Left ventricle myocardium inferior (tissue), 1 donor: ENCODE measurements at regions of chr17 and their contacts with region 1.

Region 1: DNA sequence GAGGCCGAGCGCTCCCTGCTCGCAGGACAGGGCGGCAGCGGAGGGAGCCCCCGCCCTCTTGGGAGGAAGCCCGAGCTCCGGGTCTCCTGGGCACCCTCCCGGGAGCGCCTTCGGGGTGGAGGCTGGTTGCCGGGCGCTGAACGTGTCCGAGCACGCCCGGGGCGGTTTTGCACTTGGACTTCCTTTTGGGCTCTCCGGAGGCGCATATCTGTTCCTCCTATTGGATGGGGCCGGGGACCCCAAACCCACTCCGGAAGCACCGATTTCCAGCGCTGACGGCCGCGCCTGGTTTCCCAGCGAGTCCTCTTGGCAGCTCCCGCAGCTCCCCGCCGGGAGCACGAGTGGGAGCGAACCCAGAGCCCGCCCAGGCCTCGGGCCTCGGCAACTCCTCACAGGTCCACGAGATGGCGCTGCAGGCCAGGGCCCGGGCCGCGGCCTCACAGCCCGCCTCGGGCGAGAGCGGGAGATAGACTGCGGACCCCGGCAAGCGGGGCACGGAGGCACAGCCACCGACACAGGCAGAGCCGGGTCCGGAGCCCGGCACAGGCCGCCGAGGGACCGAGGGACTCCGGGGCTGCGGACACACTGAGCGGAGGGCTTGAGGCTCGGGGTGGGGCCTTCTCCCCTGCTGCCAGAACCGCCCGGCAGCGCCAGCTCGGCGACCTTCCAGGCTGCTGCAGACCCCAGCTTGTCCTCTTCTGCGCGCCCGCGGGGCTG is 12.7 kb downstream of the TBX2 start:
- DNase-seq: peak; percentile 84
- H3K4me3 ChIP-seq: peak overlapping the region; percentile 77
- H3K27ac ChIP-seq: peak overlapping the region; percentile 93
- H3K4me1 ChIP-seq: peaks cover 82% of the 10 kb centered on the region
- H3K27me3 ChIP-seq: peaks cover 27% of the 10 kb centered on the region
- CTCF ChIP-seq: peak; percentile 100

Region 2: GRCh38 chr17:61002316-61002736 is 410.0 kb before region 1 on chr17:
- intact Hi-C with region 1: loop called (anchors 10 kb)
- DNase-seq: no peak
- H3K4me3 ChIP-seq: no peak overlapping the region
- H3K27ac ChIP-seq: peak overlapping the region; percentile 39
- H3K4me1 ChIP-seq: peaks cover 10% of the 10 kb centered on the region
- H3K27me3 ChIP-seq: no peaks in the 10 kb centered on the region
- CTCF ChIP-seq: peak; percentile 69

Region 3: DNA sequence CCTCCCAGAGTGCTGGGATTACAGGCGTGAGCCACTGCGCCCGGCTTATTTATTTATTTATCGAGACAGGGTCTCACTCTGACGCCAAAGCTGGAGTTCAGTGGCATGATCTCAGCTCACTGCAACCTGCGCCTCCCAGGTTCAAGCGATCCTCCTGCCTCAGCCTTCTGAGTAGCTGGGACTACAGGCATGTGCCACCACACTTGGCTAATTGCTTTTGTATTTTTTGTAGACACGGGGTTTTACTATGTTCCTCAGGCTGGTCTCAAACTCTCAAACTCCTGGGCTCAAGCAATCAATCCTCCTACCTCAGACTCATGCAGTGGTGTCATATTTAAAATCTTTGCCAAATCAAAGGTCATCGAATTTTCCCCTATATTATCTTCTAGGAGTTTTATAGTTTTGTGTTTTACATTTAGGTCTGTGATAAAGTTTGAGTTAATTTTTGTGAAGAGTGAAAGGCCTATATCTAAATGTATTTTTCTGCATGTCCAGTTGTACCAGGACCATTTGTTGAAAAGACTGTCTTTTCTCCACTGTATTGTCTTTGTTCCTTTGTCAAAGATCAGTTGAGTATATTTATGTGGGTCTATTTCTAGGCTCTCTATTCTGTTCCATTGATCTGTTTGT is 131.6 kb after region 1 on chr17:
- intact Hi-C with region 1: loop called (anchors 10 kb)
- DNase-seq: no peak
- H3K4me3 ChIP-seq: no peak overlapping the region
- H3K27ac ChIP-seq: no peak overlapping the region
- H3K4me1 ChIP-seq: no peaks in the 10 kb centered on the region
- H3K27me3 ChIP-seq: peaks cover 13% of the 10 kb centered on the region
- CTCF ChIP-seq: no peak